Testis (tissue), 5 donors: ENCODE measurements at regions of chr2 and their contacts with region 1.

Region 1: GRCh38 chr2:69565431-69565839 is 78.1 kb downstream of the AAK1 start:
- DNase-seq: peak; percentile 68
- H3K4me3 ChIP-seq: no peak overlapping the region
- H3K27ac ChIP-seq: no peak overlapping the region
- H3K4me1 ChIP-seq: no peaks in the 10 kb centered on the region
- H3K27me3 ChIP-seq: no peaks in the 10 kb centered on the region
- CTCF ChIP-seq: peak in 2 of 3 experiments; percentile 58 to 78
- POLR2A ChIP-seq: no peak

Region 2: DNA sequence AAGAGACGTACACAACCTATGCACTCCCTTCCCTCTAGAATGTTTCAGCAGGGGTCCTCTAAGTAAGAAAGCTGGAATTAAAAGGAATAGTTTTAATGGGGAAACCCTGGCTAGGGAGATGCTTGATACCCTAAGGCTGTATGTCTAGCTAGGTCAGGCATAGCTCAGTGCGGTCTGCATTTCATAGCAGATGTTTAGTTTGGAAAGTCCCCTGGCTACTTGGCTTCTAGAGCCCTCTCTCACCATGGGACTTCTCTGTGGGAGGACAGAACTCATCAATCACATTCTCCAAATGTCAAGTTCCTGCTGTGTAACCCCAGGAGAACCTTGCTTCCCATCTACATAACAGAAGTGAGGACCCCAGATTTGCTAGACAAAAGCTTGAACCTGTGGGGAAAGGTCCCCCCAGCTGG is 152.4 kb after region 1 on chr2:
- intact Hi-C with region 1: loop called (anchors 10 kb)
- DNase-seq: no peak
- H3K4me3 ChIP-seq: no peak overlapping the region
- H3K27ac ChIP-seq: no peak overlapping the region
- H3K4me1 ChIP-seq: no peaks in the 10 kb centered on the region
- H3K27me3 ChIP-seq: no peaks in the 10 kb centered on the region
- CTCF ChIP-seq: no peak
- POLR2A ChIP-seq: no peak